ENCODE measurements at regions of chr7 and their contacts with region 1.

Region 1: GRCh38 chr7:123797673-123798527 is 47.1 kb upstream of the HYAL4 start:
- DNase-seq: no peak
- ATAC-seq: peak; percentile 78
- H3K4me3 ChIP-seq: no peak overlapping the region
- H3K27ac ChIP-seq: no peak overlapping the region
- H3K4me1 ChIP-seq: no peaks in the 10 kb centered on the region
- H3K27me3 ChIP-seq: no peaks in the 10 kb centered on the region
- CTCF ChIP-seq: peak in 2 of 3 experiments; percentile 28 to 59; a peak in 3 of 6 replicates
- EP300 ChIP-seq: no peak
- POLR2A ChIP-seq: no peak
- RAD21 ChIP-seq: peak; percentile 88

Region 2: GRCh38 chr7:123682690-123683089 is 115.2 kb before region 1 on chr7:
- CTCF ChIA-PET with region 1: interaction called, 26 read pairs
- POLR2A ChIA-PET with region 1: no interaction called
- RAD21 ChIA-PET with region 1: interaction called, 13 read pairs
- SMC1A ChIA-PET with region 1: interaction called, 12 read pairs
- in situ Hi-C with region 1: no loop called
- intact Hi-C with region 1: no loop called
- DNase-seq: no peak
- ATAC-seq: peak; percentile 81
- H3K4me3 ChIP-seq: no peak overlapping the region
- H3K27ac ChIP-seq: no peak overlapping the region
- H3K4me1 ChIP-seq: no peaks in the 10 kb centered on the region
- H3K27me3 ChIP-seq: no peaks in the 10 kb centered on the region
- CTCF ChIP-seq: peak; percentile 35 to 61 (median 46); a peak in 5 of 6 replicates
- EP300 ChIP-seq: no peak
- POLR2A ChIP-seq: no peak
- RAD21 ChIP-seq: peak; percentile 74

Region 3: GRCh38 chr7:123770378-123770777 is 27.5 kb before region 1 on chr7:
- CTCF ChIA-PET with region 1: interaction called, 12 read pairs
- POLR2A ChIA-PET with region 1: no interaction called
- RAD21 ChIA-PET with region 1: interaction called, 15 read pairs
- SMC1A ChIA-PET with region 1: interaction called, 22 read pairs
- in situ Hi-C with region 1: no loop called
- intact Hi-C with region 1: no loop called
- DNase-seq: no peak
- ATAC-seq: peak; percentile 99
- H3K4me3 ChIP-seq: no peak overlapping the region
- H3K27ac ChIP-seq: no peak overlapping the region; the same call in 1 of the 2 replicates
- H3K4me1 ChIP-seq: no peaks in the 10 kb centered on the region
- H3K27me3 ChIP-seq: no peaks in the 10 kb centered on the region
- CTCF ChIP-seq: no peak
- EP300 ChIP-seq: peak in 1 of 2 experiments; percentile 47; a peak in 1 of 4 replicates
- POLR2A ChIP-seq: no peak
- RAD21 ChIP-seq: no peak

Region 4: GRCh38 chr7:123811056-123811455 is 13.2 kb after region 1 on chr7:
- CTCF ChIA-PET with region 1: interaction called, 16 read pairs
- POLR2A ChIA-PET with region 1: interaction called, 3 read pairs
- RAD21 ChIA-PET with region 1: interaction called, 6 read pairs
- SMC1A ChIA-PET with region 1: interaction called, 8 read pairs
- in situ Hi-C with region 1: no loop called
- intact Hi-C with region 1: no loop called
- DNase-seq: no peak
- ATAC-seq: no peak
- H3K4me3 ChIP-seq: no peak overlapping the region
- H3K27ac ChIP-seq: no peak overlapping the region
- H3K4me1 ChIP-seq: no peaks in the 10 kb centered on the region
- H3K27me3 ChIP-seq: no peaks in the 10 kb centered on the region
- CTCF ChIP-seq: no peak
- EP300 ChIP-seq: no peak
- POLR2A ChIP-seq: no peak
- RAD21 ChIP-seq: no peak

Region 5: GRCh38 chr7:123846216-123846891 is 48.5 kb after region 1 on chr7:
- CTCF ChIA-PET with region 1: interaction called, 25 read pairs
- POLR2A ChIA-PET with region 1: interaction called, 3 read pairs
- RAD21 ChIA-PET with region 1: interaction called, 4 read pairs
- SMC1A ChIA-PET with region 1: interaction called, 19 read pairs
- in situ Hi-C with region 1: no loop called
- intact Hi-C with region 1: no loop called
- DNase-seq: peak; percentile 7
- ATAC-seq: peak; percentile 93
- H3K4me3 ChIP-seq: no peak overlapping the region
- H3K27ac ChIP-seq: no peak overlapping the region
- H3K4me1 ChIP-seq: no peaks in the 10 kb centered on the region
- H3K27me3 ChIP-seq: no peaks in the 10 kb centered on the region
- CTCF ChIP-seq: no peak
- EP300 ChIP-seq: no peak
- POLR2A ChIP-seq: no peak
- RAD21 ChIP-seq: no peak